ENCODE measurements at regions of chr12 and their contacts with region 1.

Region 1: DNA sequence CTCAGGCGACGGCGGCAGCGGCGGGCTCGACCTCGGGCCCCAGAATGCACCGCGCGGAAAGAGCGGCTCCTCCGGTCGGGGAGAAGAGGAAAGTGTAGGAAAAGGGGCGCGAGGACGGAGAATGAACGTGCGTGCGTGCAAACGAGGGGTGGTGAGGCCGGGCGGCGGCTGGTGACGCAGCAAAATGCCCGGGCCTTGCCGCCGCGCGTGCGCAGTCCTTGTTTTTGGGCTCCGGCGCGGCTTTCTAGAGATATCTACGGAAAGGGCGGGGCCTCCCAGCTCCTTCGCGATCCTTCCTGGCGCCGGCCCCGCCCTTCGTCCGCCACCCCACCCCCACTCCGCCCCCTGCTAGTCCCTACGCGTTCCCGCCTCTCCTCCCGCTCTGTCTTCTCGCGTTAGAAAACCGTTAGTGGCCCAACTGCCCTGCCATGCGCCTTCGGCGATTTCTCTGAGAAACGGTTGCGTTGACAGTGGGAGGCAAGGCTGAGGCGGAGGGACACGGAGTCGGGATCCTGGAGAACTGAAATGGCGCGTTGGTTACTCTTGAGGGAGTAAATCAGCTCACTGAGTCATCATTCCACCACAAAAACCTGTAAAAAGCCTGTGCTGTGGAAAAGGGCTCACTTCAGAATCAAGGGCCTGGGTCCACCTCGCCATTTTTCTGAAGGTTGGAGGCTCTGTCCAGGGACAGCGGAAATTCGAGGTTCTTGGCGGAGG is at the start of gene PTGES3:
- DNase-seq: peak; percentile 99
- H3K4me3 Mint-ChIP-seq: peak within 1 kb of the TSS; percentile 90
- H3K27ac Mint-ChIP-seq: peak within 1 kb of the TSS; percentile 99
- H3K4me1 Mint-ChIP-seq: peaks cover 19% of the 10 kb centered on the region
- H3K27me3 Mint-ChIP-seq: no peaks in the 10 kb centered on the region
- total RNA-seq, gene PTGES3: 289 to 293 TPM

Region 2: GRCh38 chr12:56333679-56334489 is 354.4 kb before region 1 on chr12 and contains the start of gene PAN2:
- CTCF ChIA-PET with region 1: no interaction called
- intact Hi-C with region 1: loop called (anchors 1 kb)
- DNase-seq: peak; percentile 98
- H3K4me3 Mint-ChIP-seq: peak within 1 kb of the TSS; percentile 97
- H3K27ac Mint-ChIP-seq: peak within 1 kb of the TSS; percentile 100
- H3K4me1 Mint-ChIP-seq: peaks cover 44% of the 10 kb centered on the region
- H3K27me3 Mint-ChIP-seq: no peaks in the 10 kb centered on the region
- total RNA-seq, gene PAN2: 82.7 to 85.4 TPM

Region 3: DNA sequence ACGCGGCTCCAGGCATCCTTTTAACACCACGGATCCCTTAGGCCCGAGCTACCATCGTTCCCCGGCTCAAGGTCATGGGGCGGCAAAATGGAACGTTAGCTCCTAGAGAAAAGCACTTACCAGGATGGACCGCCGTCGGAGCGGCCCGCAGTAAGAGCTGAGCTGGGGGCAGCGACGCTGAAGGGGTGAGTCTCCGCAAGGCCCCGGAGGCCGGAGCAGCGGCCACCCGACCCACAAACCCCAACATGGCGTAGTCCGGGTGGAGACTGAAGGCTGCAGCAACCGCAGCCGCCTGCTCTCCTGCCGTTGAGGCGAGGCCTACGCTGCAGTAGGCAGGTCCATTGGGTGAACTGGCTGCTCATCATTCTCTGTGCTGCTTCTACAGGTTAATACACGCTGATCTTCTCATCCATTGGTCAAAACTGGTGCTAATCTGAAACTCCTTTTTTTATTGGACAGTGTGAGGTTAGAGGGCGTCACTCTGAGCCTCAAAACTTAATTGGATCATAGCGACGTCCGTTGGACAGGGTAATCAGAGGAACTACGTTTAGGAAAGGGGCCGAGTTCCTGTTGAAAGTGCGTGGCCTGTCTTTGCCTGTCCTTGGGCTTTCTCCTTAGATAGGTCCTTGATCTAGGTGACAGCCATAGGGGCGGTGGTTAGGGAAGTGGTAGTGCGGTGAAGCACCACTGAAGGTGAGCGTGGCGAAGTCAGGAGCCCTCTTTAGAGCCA is 42.4 kb before region 1 on chr12 and contains the start of gene ATP5F1B:
- CTCF ChIA-PET with region 1: no interaction called
- intact Hi-C with region 1: loop called (anchors 1 kb)
- DNase-seq: peak; percentile 97
- H3K4me3 Mint-ChIP-seq: peak within 1 kb of the TSS; percentile 96
- H3K27ac Mint-ChIP-seq: peak within 1 kb of the TSS; percentile 93
- H3K4me1 Mint-ChIP-seq: peaks cover 33% of the 10 kb centered on the region
- H3K27me3 Mint-ChIP-seq: no peaks in the 10 kb centered on the region
- total RNA-seq, gene ATP5F1B: 854 to 863 TPM

Region 4: GRCh38 chr12:56724972-56725722 is 36.9 kb after region 1 on chr12 and contains the start of gene NACA:
- CTCF ChIA-PET with region 1: interaction called, 3 read pairs
- intact Hi-C with region 1: loop called (anchors 1 kb)
- DNase-seq: peak; percentile 99
- H3K4me3 Mint-ChIP-seq: peak within 1 kb of the TSS; percentile 99
- H3K27ac Mint-ChIP-seq: peak within 1 kb of the TSS; percentile 99
- H3K4me1 Mint-ChIP-seq: peaks cover 46% of the 10 kb centered on the region
- H3K27me3 Mint-ChIP-seq: no peaks in the 10 kb centered on the region
- total RNA-seq, gene NACA: 1,279 to 1,321 TPM

Region 5: GRCh38 chr12:57078519-57079404 is 390.5 kb after region 1 on chr12 and contains the start of gene NEMP1:
- CTCF ChIA-PET with region 1: interaction called, 6 read pairs
- intact Hi-C with region 1: loop called (anchors 2 kb)
- DNase-seq: peak; percentile 98
- H3K4me3 Mint-ChIP-seq: peak within 1 kb of the TSS; percentile 99
- H3K27ac Mint-ChIP-seq: peak within 1 kb of the TSS; percentile 98
- H3K4me1 Mint-ChIP-seq: peaks cover 37% of the 10 kb centered on the region
- H3K27me3 Mint-ChIP-seq: no peaks in the 10 kb centered on the region
- total RNA-seq, gene NEMP1: 71.3 to 72.2 TPM

Region 6: GRCh38 chr12:57238854-57239554 is 550.7 kb after region 1 on chr12:
- CTCF ChIA-PET with region 1: no interaction called
- intact Hi-C with region 1: loop called (anchors 2 kb)
- DNase-seq: peak; percentile 91
- H3K4me3 Mint-ChIP-seq: peak overlapping the region; percentile 93
- H3K27ac Mint-ChIP-seq: peak overlapping the region; percentile 66
- H3K4me1 Mint-ChIP-seq: peaks cover 66% of the 10 kb centered on the region
- H3K27me3 Mint-ChIP-seq: peaks cover 50% of the 10 kb centered on the region